Activated CD4-positive, alpha-beta memory T cell treated with anti-CD3 and anti-CD28 coated beads for 36 hours (primary cell): ENCODE measurements at regions of chr3 and their contacts with region 1.

Region 1: GRCh38 chr3:191336833-191337232 is 6.5 kb upstream of the UTS2B start:
- DNase-seq: no peak
- H3K4me3 Mint-ChIP-seq: no peak overlapping the region
- H3K27ac Mint-ChIP-seq: no peak overlapping the region
- H3K4me1 Mint-ChIP-seq: peaks cover 10% of the 10 kb centered on the region
- H3K27me3 Mint-ChIP-seq: no peaks in the 10 kb centered on the region

Region 2: GRCh38 chr3:190064112-190064511 is 1272.7 kb before region 1 on chr3:
- CTCF ChIA-PET with region 1: no interaction called
- POLR2A ChIA-PET with region 1: no interaction called
- intact Hi-C with region 1: no loop called
- DNase-seq: no peak
- H3K4me3 Mint-ChIP-seq: no peak overlapping the region
- H3K27ac Mint-ChIP-seq: no peak overlapping the region
- H3K4me1 Mint-ChIP-seq: no peaks in the 10 kb centered on the region
- H3K27me3 Mint-ChIP-seq: peaks cover 3% of the 10 kb centered on the region

Region 3: GRCh38 chr3:191356611-191357439 is 20.0 kb after region 1 on chr3:
- CTCF ChIA-PET with region 1: interaction called, 3 read pairs
- POLR2A ChIA-PET with region 1: no interaction called
- intact Hi-C with region 1: loop called (anchors 2 kb)
- DNase-seq: no peak
- H3K4me3 Mint-ChIP-seq: no peak overlapping the region
- H3K27ac Mint-ChIP-seq: no peak overlapping the region
- H3K4me1 Mint-ChIP-seq: peaks cover 18% of the 10 kb centered on the region
- H3K27me3 Mint-ChIP-seq: no peaks in the 10 kb centered on the region